ENCODE measurements at regions of chr9 and their contacts with region 1.

Region 1: GRCh38 chr9:128094166-128094967 is 26.3 kb downstream of the SLC25A25 start:
- DNase-seq: peak; percentile 93
- ATAC-seq: peak; percentile 94
- H3K4me3 Mint-ChIP-seq: peak overlapping the region; percentile 61
- H3K27ac Mint-ChIP-seq: peak overlapping the region; percentile 97
- H3K4me1 Mint-ChIP-seq: peaks cover 84% of the 10 kb centered on the region
- H3K27me3 Mint-ChIP-seq: no peaks in the 10 kb centered on the region

Region 2: DNA sequence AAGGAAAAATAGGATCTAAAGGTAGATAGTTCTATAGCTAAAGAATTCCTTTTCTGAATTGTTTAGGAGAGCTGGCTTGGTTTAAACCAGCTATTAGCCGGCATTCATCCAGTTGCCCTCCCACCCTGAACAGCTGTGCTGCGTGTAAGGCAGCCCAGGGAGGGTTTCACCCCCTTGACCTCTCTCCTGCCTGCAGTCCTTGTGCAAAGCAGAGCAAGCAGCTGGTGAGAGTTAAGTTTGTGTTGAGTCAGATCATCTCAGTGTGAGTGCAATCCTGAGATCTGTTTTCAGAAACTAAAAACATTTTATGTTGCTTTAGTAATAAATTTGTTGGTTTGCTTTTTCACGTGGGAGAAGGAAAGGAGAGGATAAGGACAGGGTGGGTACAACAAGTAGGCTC is 13.3 kb before region 1 on chr9:
- CTCF ChIA-PET with region 1: interaction called, 14 read pairs
- POLR2A ChIA-PET with region 1: no interaction called
- intact Hi-C with region 1: no loop called
- DNase-seq: no peak
- ATAC-seq: no peak
- H3K4me3 Mint-ChIP-seq: no peak overlapping the region
- H3K27ac Mint-ChIP-seq: peak overlapping the region; percentile 9
- H3K4me1 Mint-ChIP-seq: peaks cover 49% of the 10 kb centered on the region
- H3K27me3 Mint-ChIP-seq: no peaks in the 10 kb centered on the region

Region 3: DNA sequence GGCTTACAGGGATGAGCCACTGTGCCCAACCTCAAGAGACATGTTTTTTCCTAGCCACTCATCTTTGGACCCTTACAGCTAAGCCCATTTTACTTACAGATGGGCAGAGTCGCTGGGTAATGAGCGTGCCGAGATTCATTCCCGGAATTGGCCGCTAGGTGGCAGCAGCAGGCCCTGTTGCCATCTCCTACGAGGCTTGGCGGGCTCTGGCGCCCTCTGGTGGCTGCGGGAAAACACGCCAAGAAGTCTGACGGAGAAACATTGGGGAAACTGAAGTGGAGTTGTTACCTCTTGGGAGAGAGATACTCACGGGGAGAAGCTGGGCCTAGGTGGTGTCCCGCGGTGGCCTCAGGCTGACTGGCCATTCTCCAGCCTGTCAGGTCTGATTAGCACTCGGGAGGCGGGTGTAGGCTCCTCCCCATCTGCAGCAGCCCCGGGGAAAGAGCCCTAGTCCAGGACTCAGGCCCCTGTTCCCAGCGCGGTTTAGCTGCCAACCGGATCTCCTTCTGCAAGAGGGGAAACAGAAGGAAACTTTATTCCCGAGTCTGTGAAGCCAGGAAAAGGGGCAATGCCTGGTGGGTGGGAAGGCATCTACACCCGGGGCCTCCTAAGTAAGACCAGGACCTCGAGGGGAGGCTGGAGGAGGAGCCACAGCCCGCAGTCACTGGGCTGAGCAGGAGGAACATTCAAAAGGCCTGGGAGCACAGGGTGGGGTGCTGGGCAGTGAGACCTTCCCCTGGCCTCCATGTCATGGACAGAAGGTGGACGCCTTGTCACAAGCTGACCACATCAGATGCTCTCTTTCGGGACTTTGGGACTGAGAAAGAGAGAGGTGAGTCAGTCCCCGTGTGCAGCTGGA is 23.5 kb after region 1 on chr9:
- CTCF ChIA-PET with region 1: interaction called, 5 read pairs
- POLR2A ChIA-PET with region 1: interaction called, 3 read pairs
- intact Hi-C with region 1: loop called in 1 of 2 experiments (anchors 1 kb)
- DNase-seq: peak; percentile 99
- ATAC-seq: peak; percentile 94
- H3K4me3 Mint-ChIP-seq: no peak overlapping the region
- H3K27ac Mint-ChIP-seq: no peak overlapping the region
- H3K4me1 Mint-ChIP-seq: peaks cover 5% of the 10 kb centered on the region
- H3K27me3 Mint-ChIP-seq: no peaks in the 10 kb centered on the region

Measured in activated CD4-positive, alpha-beta T cell treated with anti-CD3 and anti-CD28 coated beads for 36 hours (primary cell).